ENCODE measurements at regions of chr11 and their contacts with region 1.

Region 1: DNA sequence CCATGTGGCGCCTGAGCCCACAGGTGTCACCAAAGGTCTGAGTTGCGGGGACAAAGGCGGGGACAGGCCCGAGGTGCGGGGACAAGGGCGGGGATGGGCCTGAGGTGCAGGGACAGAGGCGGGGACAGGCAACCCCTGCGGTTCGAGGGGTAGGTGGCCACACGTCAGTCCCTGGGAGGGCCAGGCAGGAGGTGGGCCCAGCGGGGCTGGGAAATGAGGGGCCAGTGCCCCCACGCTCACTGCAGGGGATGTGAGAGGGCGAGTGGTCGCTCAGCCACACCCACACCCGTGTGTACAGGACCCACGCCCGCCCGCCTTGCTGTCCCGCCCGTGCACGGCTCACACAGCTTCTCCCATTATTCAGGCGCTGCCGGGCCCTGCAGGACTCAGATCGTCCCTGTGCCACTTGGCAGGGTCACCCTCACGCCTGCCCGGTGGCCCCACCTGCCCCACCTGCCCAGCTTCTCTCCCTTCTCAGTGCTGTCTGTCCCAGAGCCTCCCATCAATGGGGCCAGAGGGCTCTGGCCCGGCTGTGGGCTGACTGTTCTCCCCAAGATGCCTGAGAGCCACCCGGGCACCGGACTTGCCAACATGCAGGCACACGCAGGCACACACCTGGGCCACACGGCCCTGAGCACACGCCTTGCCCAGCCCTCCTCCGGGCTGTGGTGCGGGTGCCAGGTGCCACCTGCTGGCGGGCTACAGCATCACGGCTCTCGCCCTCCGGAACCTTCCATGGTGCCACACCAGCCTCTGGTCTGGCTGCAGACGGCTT is 14.2 kb upstream of the MUC6 start:
- DNase-seq: peak; percentile 95
- H3K4me3 ChIP-seq: no peak overlapping the region
- H3K27ac ChIP-seq: no peak overlapping the region
- H3K4me1 ChIP-seq: peaks cover 0 to 22% of the 10 kb centered on the region in 2 experiments; a peak in 1 of 4 replicates
- H3K27me3 ChIP-seq: no peaks in the 10 kb centered on the region; the same call in 1 of the 2 replicates
- CTCF ChIP-seq: peak; percentile 79
- EP300 ChIP-seq: no peak
- RAD21 ChIP-seq: peak; percentile 92

Region 2: GRCh38 chr11:848380-848931 is 202.3 kb before region 1 on chr11:
- CTCF ChIA-PET with region 1: interaction called, 70 read pairs
- POLR2A ChIA-PET with region 1: interaction called, 5 read pairs
- DNase-seq: peak; percentile 89
- H3K4me3 ChIP-seq: peak overlapping the region in 1 of 2 experiments; percentile 26; a peak in 1 of 4 replicates
- H3K27ac ChIP-seq: no peak overlapping the region
- H3K4me1 ChIP-seq: peaks cover 32 to 41% of the 10 kb centered on the region in 2 experiments; a peak in 3 of 4 replicates
- H3K27me3 ChIP-seq: no peaks in the 10 kb centered on the region
- CTCF ChIP-seq: peak; percentile 73
- EP300 ChIP-seq: no peak
- RAD21 ChIP-seq: peak; percentile 79

Region 3: DNA sequence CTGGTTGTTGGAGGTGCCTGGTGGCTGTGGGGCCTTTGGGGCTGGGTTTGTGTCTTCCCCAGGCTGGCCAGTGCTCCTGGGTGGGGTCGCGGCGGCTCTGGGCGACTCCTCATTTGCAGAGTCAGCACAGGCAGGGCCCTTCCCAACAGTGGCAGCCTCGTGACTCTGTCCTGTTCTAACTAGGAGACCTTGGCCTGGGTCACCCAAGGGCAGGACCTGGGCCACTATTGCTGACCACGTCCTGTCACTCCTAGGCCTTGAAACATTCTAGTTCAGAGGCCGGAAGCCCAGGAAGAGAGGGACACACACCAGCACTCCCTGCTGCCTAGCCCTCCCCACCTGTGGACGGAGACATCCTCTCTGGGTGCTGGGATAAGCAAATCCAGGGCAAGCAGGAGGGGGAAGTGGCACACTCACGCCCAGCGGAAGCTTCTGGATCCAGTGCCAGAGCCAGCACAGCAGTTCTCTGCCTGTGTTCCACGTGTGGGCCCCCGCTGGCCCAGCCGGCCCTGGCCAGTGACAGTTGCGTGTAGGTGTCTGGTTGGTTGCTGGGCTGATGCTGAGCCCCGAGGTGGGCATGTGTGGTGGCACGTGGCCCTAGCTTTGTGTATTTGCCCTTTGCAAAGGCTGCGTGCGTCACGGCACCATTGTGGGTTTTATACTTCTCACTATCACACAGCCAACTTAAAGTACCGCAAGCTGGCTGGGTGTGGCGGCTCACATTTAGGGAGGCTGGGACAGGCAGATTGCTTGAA is 135.8 kb before region 1 on chr11:
- CTCF ChIA-PET with region 1: interaction called, 12 read pairs
- POLR2A ChIA-PET with region 1: no interaction called
- DNase-seq: no peak
- H3K4me3 ChIP-seq: no peak overlapping the region
- H3K27ac ChIP-seq: no peak overlapping the region
- H3K4me1 ChIP-seq: peaks cover 0 to 9% of the 10 kb centered on the region in 2 experiments; a peak in 1 of 4 replicates
- H3K27me3 ChIP-seq: no peaks in the 10 kb centered on the region
- CTCF ChIP-seq: no peak
- EP300 ChIP-seq: no peak
- RAD21 ChIP-seq: no peak

Region 4: DNA sequence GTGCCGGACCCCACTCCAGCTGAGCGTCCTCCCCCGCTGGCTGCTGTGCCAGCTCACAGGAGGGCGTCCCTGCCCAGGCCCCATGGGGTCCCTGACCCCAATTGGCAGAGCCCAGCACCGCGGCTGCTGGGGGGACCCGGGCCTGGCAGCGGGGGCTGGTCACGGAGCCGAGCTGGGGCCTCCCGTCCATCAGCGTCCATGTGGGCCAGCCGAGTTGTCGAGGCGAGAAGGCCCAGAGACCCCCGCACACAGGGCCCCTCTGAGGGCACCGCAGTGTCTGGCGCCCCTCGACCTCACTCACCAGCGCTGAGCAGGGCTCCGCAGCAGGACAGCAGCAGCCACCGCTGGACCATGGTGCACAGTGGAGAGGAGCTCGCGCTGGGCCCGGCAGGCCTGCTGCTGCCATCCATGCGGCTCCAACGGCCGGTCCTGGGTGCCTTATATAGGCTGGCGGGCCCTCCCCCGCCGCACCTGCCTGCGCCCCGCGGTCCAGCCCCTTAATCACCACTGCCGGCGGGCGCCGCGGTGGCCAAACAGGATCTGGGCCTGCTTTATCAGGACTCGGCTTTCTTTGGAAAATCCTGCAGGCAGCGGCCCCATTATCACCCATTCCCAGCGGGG is 14.4 kb before region 1 on chr11 and contains the start of gene MUC6:
- CTCF ChIA-PET with region 1: interaction called, 25 read pairs
- POLR2A ChIA-PET with region 1: no interaction called
- DNase-seq: no peak
- H3K4me3 ChIP-seq: no peak within 1 kb of the TSS
- H3K27ac ChIP-seq: no peak within 1 kb of the TSS
- H3K4me1 ChIP-seq: peaks cover 0 to under 1% of the 10 kb centered on the region in 2 experiments; a peak in 1 of 4 replicates
- H3K27me3 ChIP-seq: no peaks in the 10 kb centered on the region
- CTCF ChIP-seq: no peak
- EP300 ChIP-seq: no peak
- RAD21 ChIP-seq: no peak
- polyA plus RNA-seq, gene MUC6: not detected in 2 replicates

Region 5: GRCh38 chr11:1103401-1104325 is 52.9 kb after region 1 on chr11:
- CTCF ChIA-PET with region 1: no interaction called
- POLR2A ChIA-PET with region 1: no interaction called
- DNase-seq: no peak
- H3K4me3 ChIP-seq: no peak overlapping the region
- H3K27ac ChIP-seq: no peak overlapping the region
- H3K4me1 ChIP-seq: no peaks in the 10 kb centered on the region
- H3K27me3 ChIP-seq: no peaks in the 10 kb centered on the region
- CTCF ChIP-seq: no peak
- EP300 ChIP-seq: no peak
- RAD21 ChIP-seq: no peak

Measured in SK-N-SH (cell line).